ENCODE measurements at regions of chrX and their contacts with region 1.

Region 1: DNA sequence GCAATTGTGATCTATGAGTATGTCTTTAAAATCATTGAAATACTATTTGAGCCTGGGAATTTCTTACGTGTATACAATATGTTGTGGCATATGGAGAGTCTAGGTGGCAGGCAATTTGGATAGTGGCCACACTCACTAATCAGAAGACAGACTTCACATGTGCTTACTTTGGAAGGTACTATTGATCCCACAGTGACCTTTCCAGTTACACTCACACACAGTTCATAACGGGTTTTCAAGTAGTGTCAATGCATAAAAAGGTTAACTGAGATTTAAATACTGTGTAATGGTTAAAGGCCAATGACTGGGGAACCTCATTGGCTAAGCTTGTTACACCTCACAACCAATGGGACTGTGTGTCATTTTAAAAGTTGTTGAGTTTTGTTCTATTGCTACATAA is 783.2 kb downstream of the RPA4 start:
- DNase-seq: no peak
- H3K4me3 ChIP-seq: no peak overlapping the region
- H3K27ac ChIP-seq: no peak overlapping the region
- H3K4me1 ChIP-seq: no peaks in the 10 kb centered on the region
- H3K27me3 ChIP-seq: no peaks in the 10 kb centered on the region
- CTCF ChIP-seq: no peak
- EP300 ChIP-seq: no peak
- RAD21 ChIP-seq: no peak

Region 2: GRCh38 chrX:97685753-97686152 is 18.9 kb after region 1 on chrX:
- CTCF ChIA-PET with region 1: interaction called, 14 read pairs
- POLR2A ChIA-PET with region 1: no interaction called
- DNase-seq: peak; percentile 41
- H3K4me3 ChIP-seq: no peak overlapping the region
- H3K27ac ChIP-seq: no peak overlapping the region
- H3K4me1 ChIP-seq: no peaks in the 10 kb centered on the region
- H3K27me3 ChIP-seq: no peaks in the 10 kb centered on the region; the same call in 1 of the 2 replicates
- CTCF ChIP-seq: peak; percentile 76
- EP300 ChIP-seq: no peak
- RAD21 ChIP-seq: peak; percentile 65